ENCODE measurements at regions of chr7 and their contacts with region 1.

Region 1: GRCh38 chr7:127949705-127950583 is 81.3 kb downstream of the LRRC4 start:
- DNase-seq: no peak
- H3K4me3 ChIP-seq: no peak overlapping the region
- H3K27ac ChIP-seq: no peak overlapping the region
- H3K4me1 ChIP-seq: peaks cover 29% of the 10 kb centered on the region
- H3K27me3 ChIP-seq: no peaks in the 10 kb centered on the region
- CTCF ChIP-seq: no peak
- POLR2A ChIP-seq: no peak

Region 2: DNA sequence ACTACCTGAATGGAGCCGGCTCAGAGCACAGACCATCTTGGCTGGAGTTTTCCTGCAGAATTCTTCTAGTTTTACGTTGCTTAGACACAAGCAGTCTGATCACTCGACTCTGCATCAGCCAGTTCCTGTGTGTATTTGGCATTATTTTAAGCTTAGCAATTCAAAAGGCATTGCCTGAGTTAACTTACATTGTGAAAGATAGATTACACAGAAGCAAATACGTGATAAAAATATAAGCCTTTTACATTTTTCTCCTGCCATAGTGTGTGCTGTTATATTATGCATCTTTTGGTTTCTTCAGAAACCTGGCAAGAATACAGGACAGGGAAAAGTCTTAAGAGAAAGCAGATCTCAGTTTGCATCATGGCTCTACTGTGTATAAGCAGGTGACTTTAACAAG is 16.8 kb before region 1 on chr7:
- CTCF ChIA-PET with region 1: interaction called, 6 read pairs
- POLR2A ChIA-PET with region 1: no interaction called
- dilution Hi-C with region 1: no loop called
- intact Hi-C with region 1: loop called (anchors 1 kb)
- DNase-seq: no peak
- H3K4me3 ChIP-seq: no peak overlapping the region
- H3K27ac ChIP-seq: no peak overlapping the region
- H3K4me1 ChIP-seq: no peaks in the 10 kb centered on the region
- H3K27me3 ChIP-seq: no peaks in the 10 kb centered on the region
- CTCF ChIP-seq: no peak
- POLR2A ChIP-seq: no peak

Measured in endothelial cell of umbilical vein (primary cell).